Calu3 (cell line): ENCODE measurements at regions of chr2 and their contacts with region 1.

Region 1: GRCh38 chr2:149156971-149157740 is 118.7 kb downstream of the LYPD6B start:
- DNase-seq: no peak
- H3K4me3 Mint-ChIP-seq: no peak overlapping the region
- H3K27ac Mint-ChIP-seq: no peak overlapping the region
- H3K4me1 Mint-ChIP-seq: no peaks in the 10 kb centered on the region
- H3K27me3 Mint-ChIP-seq: no peaks in the 10 kb centered on the region
- CTCF ChIP-seq: no peak

Region 2: DNA sequence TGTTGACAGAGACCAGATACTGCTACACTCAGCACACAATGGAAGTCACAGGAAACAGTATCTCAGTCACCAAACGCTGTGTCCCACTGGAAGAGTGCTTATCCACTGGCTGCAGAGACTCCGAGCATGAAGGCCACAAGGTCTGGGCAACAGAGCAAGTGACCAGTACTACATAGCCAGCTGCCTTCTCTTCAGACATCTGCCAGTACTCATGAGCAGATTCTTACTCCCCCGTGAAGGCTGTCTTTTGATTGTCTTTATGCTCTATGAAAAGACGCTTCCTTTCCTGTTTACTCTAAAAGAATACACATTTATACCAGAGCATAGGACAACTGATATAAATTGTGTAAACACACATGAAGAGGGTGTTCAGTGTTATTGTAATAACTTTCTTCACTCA is 311.5 kb after region 1 on chr2:
- CTCF ChIA-PET with region 1: interaction called, 10 read pairs
- intact Hi-C with region 1: no loop called
- DNase-seq: no peak
- H3K4me3 Mint-ChIP-seq: no peak overlapping the region
- H3K27ac Mint-ChIP-seq: no peak overlapping the region
- H3K4me1 Mint-ChIP-seq: no peaks in the 10 kb centered on the region
- H3K27me3 Mint-ChIP-seq: no peaks in the 10 kb centered on the region
- CTCF ChIP-seq: no peak